Heart right ventricle (tissue), 16 donors: ENCODE measurements at regions of chr10 and their contacts with region 1.

Region 1: DNA sequence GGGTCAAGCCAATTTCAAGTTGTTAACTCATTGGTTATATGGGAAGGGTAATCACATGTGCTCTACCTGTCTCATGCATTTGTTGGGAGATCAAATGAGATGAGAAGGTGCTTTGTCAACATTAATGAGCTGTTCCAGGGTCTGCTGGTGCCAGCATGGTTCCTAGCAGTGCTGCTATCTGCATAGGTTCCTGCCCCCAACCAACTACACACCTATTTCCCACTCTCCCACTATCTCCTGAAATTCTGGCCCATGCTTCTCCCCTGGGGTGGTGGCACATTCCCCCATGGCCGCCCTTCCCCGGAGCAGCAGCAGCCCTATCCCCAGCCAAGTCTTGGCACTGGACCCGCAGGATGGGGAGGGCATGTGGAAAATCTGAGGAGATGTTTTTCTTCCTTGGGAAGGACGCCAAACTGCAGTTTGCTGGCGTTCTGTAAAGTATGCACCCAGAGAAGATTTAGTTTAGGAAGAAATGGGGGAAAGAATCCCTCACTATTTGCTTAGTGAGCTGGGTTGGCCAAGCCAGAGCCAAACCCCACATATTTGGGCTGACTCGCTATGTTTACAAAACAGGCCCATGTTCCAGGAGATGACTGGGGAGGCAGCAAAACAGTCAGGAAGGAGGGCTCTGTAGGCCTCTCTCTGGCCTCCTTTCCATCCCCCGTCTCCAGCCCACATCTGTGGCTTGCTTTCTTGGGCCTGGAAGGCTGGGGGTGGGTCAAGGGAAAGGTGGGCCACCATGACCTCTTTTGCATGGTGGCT is 42.5 kb downstream of the PPP1R3C start:
- DNase-seq: peak; percentile 57 to 58
- ATAC-seq: peak; percentile 17 to 46 (median 34)
- H3K4me3 ChIP-seq: no peak overlapping the region
- H3K27ac ChIP-seq: peak overlapping the region; percentile 78 to 95 (median 90)
- H3K4me1 ChIP-seq: peaks cover 22 to 83% (median 71%) of the 10 kb centered on the region in 9 donors
- H3K27me3 ChIP-seq: no peaks in the 10 kb centered on the region
- CTCF ChIP-seq: no peak

Region 2: GRCh38 chr10:91607646-91608403 is 17.5 kb after region 1 on chr10:
- intact Hi-C with region 1: loop called in 2 of 10 experiments (anchors 2 kb)
- DNase-seq: no peak
- ATAC-seq: peak; percentile 21 to 83 (median 68)
- H3K4me3 ChIP-seq: peak overlapping the region in 1 of 10 donors; percentile 3
- H3K27ac ChIP-seq: peak overlapping the region; percentile 77 to 96 (median 88)
- H3K4me1 ChIP-seq: peaks cover 0 to 65% (median 44%) of the 10 kb centered on the region in 9 donors
- H3K27me3 ChIP-seq: no peaks in the 10 kb centered on the region
- CTCF ChIP-seq: no peak

Region 3: GRCh38 chr10:91621483-91622113 is 31.3 kb after region 1 on chr10:
- intact Hi-C with region 1: loop called in 3 of 10 experiments (anchors 5 kb)
- DNase-seq: no peak
- ATAC-seq: peak in 7 of 8 donors; percentile 36 to 89 (median 72)
- H3K4me3 ChIP-seq: no peak overlapping the region
- H3K27ac ChIP-seq: peak overlapping the region; percentile 2 to 59 (median 40)
- H3K4me1 ChIP-seq: peaks cover 0 to 18% (median 0%) of the 10 kb centered on the region in 9 donors
- H3K27me3 ChIP-seq: no peaks in the 10 kb centered on the region
- CTCF ChIP-seq: no peak

Region 4: DNA sequence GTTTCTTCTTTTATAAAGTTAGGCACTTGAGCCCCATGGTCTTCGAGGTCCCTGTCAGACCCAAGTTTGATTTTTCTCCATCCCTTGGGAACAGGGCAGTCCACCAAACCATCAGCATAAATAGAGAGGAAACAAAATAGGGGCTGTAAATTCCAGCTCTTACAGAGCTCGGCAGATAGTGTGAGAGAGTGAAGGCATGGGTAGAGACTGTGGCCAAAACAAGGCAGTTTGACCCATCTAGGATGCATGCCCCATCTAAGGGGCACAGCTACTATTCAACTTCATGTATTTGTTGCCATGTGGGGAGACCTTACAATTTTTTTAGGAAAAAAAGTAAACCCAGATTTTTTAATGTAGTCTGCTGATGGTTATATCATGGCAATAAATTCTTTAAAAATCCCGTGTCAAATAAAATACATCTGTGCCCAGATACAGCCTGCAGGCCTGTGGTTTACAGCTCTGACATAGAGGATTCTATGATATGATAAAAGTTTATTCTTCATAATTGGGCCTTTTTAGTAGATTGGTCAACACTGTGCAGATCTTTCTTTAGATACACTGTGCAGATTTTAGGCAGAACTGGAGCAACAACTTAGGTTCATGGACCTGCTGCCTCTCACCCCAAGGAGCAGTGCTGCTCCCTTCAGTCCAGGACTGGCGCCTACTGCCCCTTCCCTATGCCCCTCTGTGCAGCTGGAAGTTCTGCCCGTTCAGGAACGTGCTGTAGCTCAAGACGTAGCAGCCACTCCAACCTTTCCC is 37.2 kb after region 1 on chr10:
- intact Hi-C with region 1: loop called in 6 of 10 experiments (anchors 5 kb)
- DNase-seq: no peak
- ATAC-seq: peak in 3 of 8 donors; percentile 23 to 62 (median 50)
- H3K4me3 ChIP-seq: peak overlapping the region in 6 of 10 donors; percentile 61 to 86 (median 74)
- H3K27ac ChIP-seq: peak overlapping the region in 8 of 10 donors; percentile 56 to 88 (median 83)
- H3K4me1 ChIP-seq: peaks cover 0 to 37% (median 9%) of the 10 kb centered on the region in 9 donors
- H3K27me3 ChIP-seq: peaks cover 0 to 5% (median 0%) of the 10 kb centered on the region in 7 donors
- CTCF ChIP-seq: peak in 2 of 9 donors; percentile 24 to 25

Region 5: DNA sequence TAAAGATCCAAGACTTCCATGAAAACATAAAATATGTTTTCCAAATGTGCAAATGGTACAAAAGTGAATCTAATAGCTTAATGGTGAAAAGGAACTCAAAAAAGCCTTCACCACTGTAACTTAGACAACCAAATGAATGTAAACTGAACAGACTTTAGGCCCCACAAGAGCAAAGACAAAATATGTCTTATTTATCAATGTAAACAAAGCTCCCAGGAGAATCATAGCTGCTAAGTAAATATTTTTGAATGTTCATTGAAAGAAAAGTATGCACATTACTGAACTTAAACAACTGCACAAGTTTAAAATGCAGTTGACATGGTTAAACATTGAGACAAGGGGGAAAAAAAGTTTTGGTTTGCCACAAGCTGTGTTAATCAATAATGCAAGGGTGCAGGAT is 69.6 kb after region 1 on chr10:
- intact Hi-C with region 1: loop called in 1 of 10 experiments (anchors 2 kb)
- DNase-seq: no peak
- ATAC-seq: no peak
- H3K4me3 ChIP-seq: no peak overlapping the region
- H3K27ac ChIP-seq: no peak overlapping the region
- H3K4me1 ChIP-seq: no peaks in the 10 kb centered on the region
- H3K27me3 ChIP-seq: no peaks in the 10 kb centered on the region
- CTCF ChIP-seq: no peak